B cell (primary cell): ENCODE measurements at regions of chr3 and their contacts with region 1.

Region 1: GRCh38 chr3:197906023-197906849 is 43.8 kb upstream of the RPL35A start:
- DNase-seq: peak; percentile 81
- ATAC-seq: peak; percentile 85
- H3K4me3 ChIP-seq: no peak overlapping the region
- H3K4me3 Mint-ChIP-seq: peak overlapping the region; percentile 37
- H3K27ac ChIP-seq: no peak overlapping the region
- H3K27ac Mint-ChIP-seq: no peak overlapping the region
- H3K4me1 ChIP-seq: peaks cover 0 to 7% of the 10 kb centered on the region in 2 donors
- H3K4me1 Mint-ChIP-seq: peaks cover 8% of the 10 kb centered on the region
- H3K27me3 ChIP-seq: no peaks in the 10 kb centered on the region
- H3K27me3 Mint-ChIP-seq: no peaks in the 10 kb centered on the region
- CTCF ChIP-seq: peak; percentile 98

Region 2: DNA sequence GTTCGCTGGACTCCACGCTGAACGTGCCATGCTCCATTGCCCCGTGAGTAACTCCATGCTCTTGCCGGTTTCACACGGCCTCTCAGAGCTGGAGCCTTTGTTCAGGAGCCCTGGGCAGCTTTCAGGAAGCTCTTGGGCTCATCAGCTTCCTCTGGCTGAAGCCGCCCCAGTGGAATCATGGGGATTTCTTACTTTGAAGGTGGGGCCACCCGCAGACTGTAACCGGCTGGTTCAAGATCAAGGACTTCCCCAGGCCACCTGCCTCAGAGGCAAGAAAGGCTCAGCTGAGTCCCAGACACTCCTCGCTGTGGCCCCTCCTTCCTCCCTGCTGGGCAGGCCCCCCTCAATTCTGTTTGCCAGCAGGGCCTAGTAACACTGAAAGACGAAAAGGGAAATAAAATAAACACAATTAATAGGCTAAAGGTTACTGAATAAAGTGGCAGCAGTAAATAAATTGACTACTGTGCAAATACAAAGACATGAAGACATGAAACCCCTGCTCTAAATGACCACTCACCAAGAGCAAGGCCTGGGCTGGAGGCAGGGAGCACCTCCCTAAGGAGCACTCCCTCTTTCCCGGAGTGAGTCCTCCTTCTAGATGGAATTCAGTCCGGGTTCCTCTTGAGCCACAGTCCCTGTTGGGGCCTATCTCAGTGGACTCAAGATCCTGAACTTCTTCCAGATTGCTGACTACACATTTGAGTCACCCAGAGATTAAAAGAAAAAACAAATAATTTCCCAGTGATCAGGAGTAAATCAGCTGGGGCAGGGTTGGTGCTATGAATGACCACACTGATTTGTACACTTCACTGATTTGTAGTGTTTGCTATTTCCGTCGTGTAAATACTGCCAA is 1746.1 kb before region 1 on chr3:
- CTCF ChIA-PET with region 1: no interaction called
- POLR2A ChIA-PET with region 1: no interaction called
- intact Hi-C with region 1: no loop called
- DNase-seq: peak; percentile 90
- ATAC-seq: peak; percentile 99
- H3K4me3 ChIP-seq: no peak overlapping the region
- H3K4me3 Mint-ChIP-seq: peak overlapping the region; percentile 73
- H3K27ac ChIP-seq: peak overlapping the region; percentile 59 to 75
- H3K27ac Mint-ChIP-seq: peak overlapping the region; percentile 94
- H3K4me1 ChIP-seq: peaks cover 13 to 15% of the 10 kb centered on the region in 2 donors
- H3K4me1 Mint-ChIP-seq: peaks cover 21% of the 10 kb centered on the region
- H3K27me3 ChIP-seq: no peaks in the 10 kb centered on the region
- H3K27me3 Mint-ChIP-seq: no peaks in the 10 kb centered on the region
- CTCF ChIP-seq: no peak

Region 3: GRCh38 chr3:197478746-197479668 is 427.2 kb before region 1 on chr3:
- CTCF ChIA-PET with region 1: no interaction called
- POLR2A ChIA-PET with region 1: no interaction called
- intact Hi-C with region 1: no loop called
- DNase-seq: no peak
- ATAC-seq: no peak
- H3K4me3 ChIP-seq: no peak overlapping the region
- H3K4me3 Mint-ChIP-seq: no peak overlapping the region
- H3K27ac ChIP-seq: no peak overlapping the region
- H3K27ac Mint-ChIP-seq: no peak overlapping the region
- H3K4me1 ChIP-seq: no peaks in the 10 kb centered on the region
- H3K4me1 Mint-ChIP-seq: no peaks in the 10 kb centered on the region
- H3K27me3 ChIP-seq: peaks cover 0 to 11% (median 2%) of the 10 kb centered on the region in 4 experiments
- H3K27me3 Mint-ChIP-seq: peaks cover 27% of the 10 kb centered on the region
- CTCF ChIP-seq: no peak

Region 4: GRCh38 chr3:197801891-197802778 is 104.1 kb before region 1 on chr3:
- CTCF ChIA-PET with region 1: no interaction called
- POLR2A ChIA-PET with region 1: no interaction called
- intact Hi-C with region 1: no loop called
- DNase-seq: peak; percentile 66
- ATAC-seq: peak; percentile 54
- H3K4me3 ChIP-seq: no peak overlapping the region
- H3K4me3 Mint-ChIP-seq: no peak overlapping the region
- H3K27ac ChIP-seq: peak overlapping the region in 1 of 2 donors; percentile 27
- H3K27ac Mint-ChIP-seq: peak overlapping the region; percentile 12
- H3K4me1 ChIP-seq: peaks cover 15 to 28% of the 10 kb centered on the region in 2 donors
- H3K4me1 Mint-ChIP-seq: peaks cover 51% of the 10 kb centered on the region
- H3K27me3 ChIP-seq: no peaks in the 10 kb centered on the region
- H3K27me3 Mint-ChIP-seq: no peaks in the 10 kb centered on the region
- CTCF ChIP-seq: peak; percentile 80

Region 5: GRCh38 chr3:197942956-197943556 is 36.8 kb after region 1 on chr3:
- CTCF ChIA-PET with region 1: interaction called, 12 read pairs
- POLR2A ChIA-PET with region 1: no interaction called
- intact Hi-C with region 1: loop called (anchors 1 kb)
- DNase-seq: peak; percentile 60
- ATAC-seq: peak; percentile 66
- H3K4me3 ChIP-seq: no peak overlapping the region
- H3K4me3 Mint-ChIP-seq: no peak overlapping the region
- H3K27ac ChIP-seq: no peak overlapping the region
- H3K27ac Mint-ChIP-seq: no peak overlapping the region
- H3K4me1 ChIP-seq: no peaks in the 10 kb centered on the region
- H3K4me1 Mint-ChIP-seq: no peaks in the 10 kb centered on the region
- H3K27me3 ChIP-seq: no peaks in the 10 kb centered on the region
- H3K27me3 Mint-ChIP-seq: no peaks in the 10 kb centered on the region
- CTCF ChIP-seq: peak; percentile 82